GM12878 (cell line): ENCODE measurements at regions of chr14 and their contacts with region 1.

Region 1: GRCh38 chr14:39426605-39427004 is 5.6 kb downstream of the FBXO33 start:
- DNase-seq: no peak
- ATAC-seq: peak; percentile 15
- H3K4me3 ChIP-seq: peak overlapping the region; percentile 45
- H3K27ac ChIP-seq: peak overlapping the region; percentile 55
- H3K4me1 ChIP-seq: peaks cover 13% of the 10 kb centered on the region
- H3K27me3 ChIP-seq: no peaks in the 10 kb centered on the region
- CTCF ChIP-seq: peak; percentile 28 to 53 (median 39); a peak in 4 of 6 replicates
- EP300 ChIP-seq: no peak
- POLR2A ChIP-seq: no peak
- RAD21 ChIP-seq: peak; percentile 65

Region 2: DNA sequence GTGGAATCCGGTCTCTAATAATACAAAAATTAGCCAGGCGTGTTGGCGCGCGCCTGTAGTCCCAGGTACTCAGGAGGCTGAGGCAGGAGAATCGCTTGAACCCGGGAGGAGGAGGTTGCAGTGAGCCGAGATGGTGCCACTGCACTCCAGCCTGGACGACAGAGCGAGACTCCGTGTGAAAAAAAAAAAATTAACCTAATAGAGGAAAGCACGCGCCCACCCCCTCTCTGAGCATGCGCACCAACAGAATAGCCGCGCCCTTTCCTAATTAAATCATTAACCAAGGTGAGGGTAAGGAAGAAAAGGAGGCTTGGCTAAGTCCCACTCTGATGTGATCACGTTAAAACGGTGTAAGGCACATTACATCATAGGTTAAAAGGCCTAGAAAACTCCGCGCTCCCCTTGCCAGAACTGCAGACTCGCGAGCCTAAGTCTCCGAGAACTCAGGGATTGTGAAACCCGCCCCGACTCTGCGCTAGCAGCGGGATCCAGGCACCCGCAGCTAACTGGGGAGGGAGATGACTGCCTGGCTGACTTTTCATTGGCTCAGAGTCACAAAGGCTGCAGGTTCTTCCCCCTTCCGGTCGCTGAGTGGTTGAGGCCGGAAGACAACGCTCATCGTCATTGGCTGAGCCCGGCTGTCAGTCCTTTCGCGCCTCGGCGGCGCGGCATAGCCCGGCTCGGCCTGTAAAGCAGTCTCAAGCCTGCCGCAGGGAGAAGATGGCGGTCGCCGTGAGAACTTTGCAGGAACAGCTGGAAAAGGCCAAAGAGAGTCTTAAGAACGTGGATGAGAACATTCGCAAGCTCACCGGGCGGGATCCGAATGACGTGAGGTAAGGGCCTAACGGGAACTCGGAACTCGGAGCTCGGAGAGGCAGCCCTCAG is 251.8 kb before region 1 on chr14 and contains the start of gene PNN:
- CTCF ChIA-PET with region 1: interaction called, 4 read pairs
- POLR2A ChIA-PET with region 1: interaction called, 3 read pairs
- RAD21 ChIA-PET with region 1: interaction called, 5 read pairs
- SMC1A ChIA-PET with region 1: interaction called, 9 read pairs
- in situ Hi-C with region 1: loop called (anchors 5 kb)
- intact Hi-C with region 1: no loop called
- DNase-seq: peak; percentile 99
- ATAC-seq: peak; percentile 93
- H3K4me3 ChIP-seq: peak within 1 kb of the TSS; percentile 90
- H3K27ac ChIP-seq: peak within 1 kb of the TSS; percentile 90
- H3K4me1 ChIP-seq: peaks cover 7% of the 10 kb centered on the region
- H3K27me3 ChIP-seq: no peaks in the 10 kb centered on the region
- CTCF ChIP-seq: no peak
- EP300 ChIP-seq: no peak; a peak in 1 of 4 replicates
- POLR2A ChIP-seq: peak; percentile 96
- RAD21 ChIP-seq: no peak
- polyA plus RNA-seq, gene PNN: 44.2 to 55.4 TPM

Region 3: DNA sequence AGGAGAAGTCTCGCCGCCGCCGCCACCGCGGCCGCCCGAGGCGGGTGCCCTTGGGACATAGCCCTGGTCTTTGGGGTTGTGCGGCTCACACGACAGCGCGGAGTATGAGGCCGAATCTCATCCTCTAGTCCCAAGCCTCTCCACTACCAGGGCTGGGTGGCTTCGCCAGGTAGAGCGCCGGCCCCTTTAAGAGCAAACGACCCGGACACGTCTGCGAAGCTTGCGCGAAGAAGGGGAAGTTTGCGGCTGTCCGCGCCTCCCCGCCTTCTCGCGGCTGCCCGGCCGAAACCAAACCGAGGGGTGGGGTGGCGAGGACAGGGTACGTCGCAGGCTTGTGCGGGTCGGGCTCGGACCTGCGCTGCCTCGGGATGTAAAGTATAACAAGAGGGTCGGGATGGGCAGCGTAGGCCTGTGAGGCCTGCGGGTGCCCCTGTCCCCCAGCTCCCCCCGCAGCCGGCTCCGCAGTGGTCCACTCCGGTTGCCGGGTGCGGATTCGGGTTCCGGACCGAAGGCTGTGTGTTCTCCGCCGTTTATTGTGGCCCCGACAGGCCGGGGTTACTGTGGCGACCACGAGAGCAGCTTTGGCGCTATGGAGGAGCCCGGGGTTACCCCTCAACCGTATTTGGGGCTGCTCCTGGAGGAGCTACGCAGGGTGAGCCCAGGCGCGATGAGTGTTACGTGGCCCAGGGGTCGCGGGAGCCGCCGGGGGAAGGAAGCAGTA is 159.6 kb before region 1 on chr14:
- CTCF ChIA-PET with region 1: interaction called, 5 read pairs
- POLR2A ChIA-PET with region 1: interaction called, 6 read pairs
- RAD21 ChIA-PET with region 1: interaction called, 16 read pairs
- SMC1A ChIA-PET with region 1: interaction called, 9 read pairs
- in situ Hi-C with region 1: loop called (anchors 5 kb)
- intact Hi-C with region 1: no loop called
- DNase-seq: no peak
- ATAC-seq: peak; percentile 92
- H3K4me3 ChIP-seq: peak overlapping the region; percentile 92
- H3K27ac ChIP-seq: peak overlapping the region; percentile 93
- H3K4me1 ChIP-seq: peaks cover 9% of the 10 kb centered on the region
- H3K27me3 ChIP-seq: no peaks in the 10 kb centered on the region
- CTCF ChIP-seq: no peak
- EP300 ChIP-seq: peak in 1 of 2 experiments; percentile 29; a peak in 1 of 4 replicates
- POLR2A ChIP-seq: peak; percentile 82
- RAD21 ChIP-seq: no peak

Region 4: GRCh38 chr14:39376667-39377403 is 49.8 kb before region 1 on chr14:
- CTCF ChIA-PET with region 1: interaction called, 12 read pairs
- POLR2A ChIA-PET with region 1: no interaction called
- RAD21 ChIA-PET with region 1: interaction called, 6 read pairs
- SMC1A ChIA-PET with region 1: interaction called, 16 read pairs
- in situ Hi-C with region 1: no loop called
- intact Hi-C with region 1: no loop called
- DNase-seq: no peak
- ATAC-seq: no peak
- H3K4me3 ChIP-seq: no peak overlapping the region
- H3K27ac ChIP-seq: no peak overlapping the region
- H3K4me1 ChIP-seq: no peaks in the 10 kb centered on the region
- H3K27me3 ChIP-seq: no peaks in the 10 kb centered on the region
- CTCF ChIP-seq: no peak
- EP300 ChIP-seq: no peak
- POLR2A ChIP-seq: no peak
- RAD21 ChIP-seq: no peak

Region 5: GRCh38 chr14:39446131-39446744 is 19.6 kb after region 1 on chr14:
- CTCF ChIA-PET with region 1: interaction called, 22 read pairs
- POLR2A ChIA-PET with region 1: interaction called, 159 read pairs
- RAD21 ChIA-PET with region 1: interaction called, 159 read pairs
- SMC1A ChIA-PET with region 1: interaction called, 182 read pairs
- in situ Hi-C with region 1: no loop called
- intact Hi-C with region 1: no loop called
- DNase-seq: no peak
- ATAC-seq: peak; percentile 56
- H3K4me3 ChIP-seq: peak overlapping the region; percentile 41; the same call in 1 of the 2 replicates
- H3K27ac ChIP-seq: peak overlapping the region; percentile 79
- H3K4me1 ChIP-seq: peaks cover 48% of the 10 kb centered on the region
- H3K27me3 ChIP-seq: no peaks in the 10 kb centered on the region
- CTCF ChIP-seq: no peak
- EP300 ChIP-seq: peak in 1 of 2 experiments; percentile 45; a peak in 1 of 4 replicates
- POLR2A ChIP-seq: no peak
- RAD21 ChIP-seq: no peak

Region 6: GRCh38 chr14:39459795-39460478 is 33.3 kb after region 1 on chr14:
- CTCF ChIA-PET with region 1: interaction called, 84 read pairs
- POLR2A ChIA-PET with region 1: interaction called, 3 read pairs
- RAD21 ChIA-PET with region 1: interaction called, 53 read pairs
- SMC1A ChIA-PET with region 1: interaction called, 11 read pairs
- in situ Hi-C with region 1: no loop called
- intact Hi-C with region 1: no loop called
- DNase-seq: no peak
- ATAC-seq: no peak
- H3K4me3 ChIP-seq: no peak overlapping the region
- H3K27ac ChIP-seq: no peak overlapping the region
- H3K4me1 ChIP-seq: no peaks in the 10 kb centered on the region
- H3K27me3 ChIP-seq: no peaks in the 10 kb centered on the region
- CTCF ChIP-seq: no peak
- EP300 ChIP-seq: no peak
- POLR2A ChIP-seq: no peak
- RAD21 ChIP-seq: no peak

Region 7: GRCh38 chr14:39807271-39807670 is 380.7 kb after region 1 on chr14:
- CTCF ChIA-PET with region 1: no interaction called
- POLR2A ChIA-PET with region 1: no interaction called
- RAD21 ChIA-PET with region 1: no interaction called
- SMC1A ChIA-PET with region 1: no interaction called
- in situ Hi-C with region 1: no loop called
- intact Hi-C with region 1: no loop called
- DNase-seq: no peak
- ATAC-seq: no peak
- H3K4me3 ChIP-seq: no peak overlapping the region
- H3K27ac ChIP-seq: no peak overlapping the region
- H3K4me1 ChIP-seq: no peaks in the 10 kb centered on the region
- H3K27me3 ChIP-seq: no peaks in the 10 kb centered on the region
- CTCF ChIP-seq: no peak
- EP300 ChIP-seq: no peak
- POLR2A ChIP-seq: no peak
- RAD21 ChIP-seq: no peak